ENCODE measurements at regions of chr1 and their contacts with region 1.

Region 1: DNA sequence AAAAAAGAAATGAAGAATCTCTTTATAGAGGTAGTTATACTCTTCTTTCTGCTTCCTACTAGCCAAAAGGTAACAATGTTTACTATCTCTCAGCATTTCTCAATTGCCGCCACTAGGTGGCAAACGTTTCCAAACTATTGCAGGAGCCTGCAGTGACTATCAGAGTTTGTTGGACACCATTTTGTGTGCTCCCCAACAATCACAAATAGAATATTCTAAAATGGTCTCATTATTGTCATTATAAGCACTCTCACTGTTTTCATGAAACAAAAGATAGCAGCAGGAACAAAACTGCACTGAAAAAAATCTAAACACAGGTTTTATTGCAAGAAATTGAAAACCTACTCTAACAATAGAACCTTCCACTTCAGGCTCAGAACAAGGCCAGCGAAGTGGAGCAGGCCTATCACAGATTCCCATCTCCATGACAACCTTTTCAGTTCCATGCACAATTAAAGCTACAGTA is 83.9 kb upstream of the PLPPR4 start:
- DNase-seq: peak; percentile 74
- ATAC-seq: peak; percentile 91
- H3K4me3 ChIP-seq: no peak overlapping the region
- H3K27ac ChIP-seq: no peak overlapping the region
- H3K4me1 ChIP-seq: no peaks in the 10 kb centered on the region
- H3K27me3 ChIP-seq: no peaks in the 10 kb centered on the region
- CTCF ChIP-seq: peak; percentile 90
- POLR2A ChIP-seq: no peak
- RAD21 ChIP-seq: peak; percentile 88

Region 2: GRCh38 chr1:98794196-98794886 is 386.0 kb before region 1 on chr1:
- CTCF ChIA-PET with region 1: interaction called, 3 read pairs
- POLR2A ChIA-PET with region 1: no interaction called
- dilution Hi-C with region 1: no loop called
- in situ Hi-C with region 1: no loop called
- intact Hi-C with region 1: loop called (anchors 2 kb)
- DNase-seq: peak; percentile 72
- ATAC-seq: peak; percentile 95
- H3K4me3 ChIP-seq: no peak overlapping the region
- H3K27ac ChIP-seq: no peak overlapping the region
- H3K4me1 ChIP-seq: no peaks in the 10 kb centered on the region
- H3K27me3 ChIP-seq: peaks cover 5% of the 10 kb centered on the region
- CTCF ChIP-seq: peak; percentile 81
- POLR2A ChIP-seq: no peak
- RAD21 ChIP-seq: peak; percentile 85

Region 3: GRCh38 chr1:99472893-99473292 is 292.5 kb after region 1 on chr1:
- CTCF ChIA-PET with region 1: interaction called, 3 read pairs
- POLR2A ChIA-PET with region 1: no interaction called
- dilution Hi-C with region 1: no loop called
- in situ Hi-C with region 1: loop called (anchors 10 kb)
- intact Hi-C with region 1: no loop called
- DNase-seq: peak; percentile 19
- ATAC-seq: no peak
- H3K4me3 ChIP-seq: no peak overlapping the region
- H3K27ac ChIP-seq: no peak overlapping the region
- H3K4me1 ChIP-seq: no peaks in the 10 kb centered on the region
- H3K27me3 ChIP-seq: no peaks in the 10 kb centered on the region
- CTCF ChIP-seq: no peak
- POLR2A ChIP-seq: no peak
- RAD21 ChIP-seq: no peak

Region 4: DNA sequence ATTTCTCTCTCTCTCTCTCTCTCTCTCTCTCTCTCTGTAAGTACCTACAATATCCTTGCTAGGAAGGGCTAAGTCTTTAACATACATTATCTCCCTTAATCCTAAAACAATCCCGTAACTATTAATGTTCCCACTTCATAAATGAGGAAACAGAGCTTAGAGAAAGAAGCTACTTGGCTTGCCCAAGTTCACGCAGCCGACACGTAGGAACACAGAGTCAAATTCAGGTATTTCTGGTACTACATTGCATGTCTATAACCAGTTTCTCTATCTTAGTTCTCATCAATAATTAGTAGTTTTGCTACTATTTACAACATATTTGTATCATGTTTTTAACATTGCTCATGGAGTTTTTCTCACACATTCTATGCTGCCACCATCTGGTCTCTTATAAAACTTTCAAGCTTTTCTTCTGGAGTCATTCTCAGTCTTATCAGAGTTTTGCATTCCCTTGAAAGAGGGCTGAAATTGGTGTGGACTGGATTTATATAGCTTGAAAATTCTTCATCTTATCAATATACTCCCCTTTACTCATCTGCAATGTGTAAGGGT is 346.6 kb after region 1 on chr1:
- CTCF ChIA-PET with region 1: interaction called, 3 read pairs
- POLR2A ChIA-PET with region 1: no interaction called
- dilution Hi-C with region 1: no loop called
- in situ Hi-C with region 1: no loop called
- intact Hi-C with region 1: loop called (anchors 1 kb)
- DNase-seq: peak; percentile 20
- ATAC-seq: no peak; the same call in 1 of the 2 replicates
- H3K4me3 ChIP-seq: no peak overlapping the region
- H3K27ac ChIP-seq: no peak overlapping the region
- H3K4me1 ChIP-seq: no peaks in the 10 kb centered on the region
- H3K27me3 ChIP-seq: no peaks in the 10 kb centered on the region
- CTCF ChIP-seq: peak; percentile 43
- POLR2A ChIP-seq: no peak
- RAD21 ChIP-seq: peak; percentile 36

Region 5: GRCh38 chr1:99691175-99691574 is 510.8 kb after region 1 on chr1:
- CTCF ChIA-PET with region 1: interaction called, 3 read pairs
- POLR2A ChIA-PET with region 1: no interaction called
- dilution Hi-C with region 1: no loop called
- in situ Hi-C with region 1: loop called (anchors 5 kb)
- intact Hi-C with region 1: loop called (anchors 5 kb)
- DNase-seq: no peak
- ATAC-seq: no peak
- H3K4me3 ChIP-seq: no peak overlapping the region
- H3K27ac ChIP-seq: no peak overlapping the region
- H3K4me1 ChIP-seq: no peaks in the 10 kb centered on the region
- H3K27me3 ChIP-seq: no peaks in the 10 kb centered on the region
- CTCF ChIP-seq: no peak
- POLR2A ChIP-seq: no peak
- RAD21 ChIP-seq: no peak

Region 6: DNA sequence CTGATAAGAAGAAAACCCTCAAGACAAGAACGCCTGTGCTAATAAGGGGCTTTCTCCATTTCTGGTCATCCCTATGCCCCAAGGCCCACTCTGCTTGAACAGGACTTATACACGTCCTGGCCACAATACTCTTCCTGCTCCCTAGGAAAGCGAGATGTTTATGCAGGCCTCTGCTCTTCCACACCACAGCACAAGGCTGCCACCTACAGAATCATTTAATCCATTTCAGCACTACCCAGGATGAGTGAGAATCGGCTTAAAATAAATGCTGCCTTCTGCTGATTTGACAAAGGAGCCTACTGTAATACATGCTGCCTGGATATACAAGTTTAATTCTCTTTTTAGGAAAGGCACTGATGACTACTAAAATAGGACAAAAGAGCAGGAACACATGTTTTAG is 556.6 kb after region 1 on chr1:
- CTCF ChIA-PET with region 1: interaction called, 5 read pairs
- POLR2A ChIA-PET with region 1: no interaction called
- dilution Hi-C with region 1: no loop called
- in situ Hi-C with region 1: no loop called
- intact Hi-C with region 1: loop called (anchors 1 kb)
- DNase-seq: peak; percentile 77
- ATAC-seq: peak; percentile 100
- H3K4me3 ChIP-seq: no peak overlapping the region
- H3K27ac ChIP-seq: no peak overlapping the region
- H3K4me1 ChIP-seq: no peaks in the 10 kb centered on the region
- H3K27me3 ChIP-seq: no peaks in the 10 kb centered on the region
- CTCF ChIP-seq: peak; percentile 72
- POLR2A ChIP-seq: no peak
- RAD21 ChIP-seq: peak; percentile 81